PC-3 (cell line): ENCODE measurements at regions of chr1 and their contacts with region 1.

Region 1: DNA sequence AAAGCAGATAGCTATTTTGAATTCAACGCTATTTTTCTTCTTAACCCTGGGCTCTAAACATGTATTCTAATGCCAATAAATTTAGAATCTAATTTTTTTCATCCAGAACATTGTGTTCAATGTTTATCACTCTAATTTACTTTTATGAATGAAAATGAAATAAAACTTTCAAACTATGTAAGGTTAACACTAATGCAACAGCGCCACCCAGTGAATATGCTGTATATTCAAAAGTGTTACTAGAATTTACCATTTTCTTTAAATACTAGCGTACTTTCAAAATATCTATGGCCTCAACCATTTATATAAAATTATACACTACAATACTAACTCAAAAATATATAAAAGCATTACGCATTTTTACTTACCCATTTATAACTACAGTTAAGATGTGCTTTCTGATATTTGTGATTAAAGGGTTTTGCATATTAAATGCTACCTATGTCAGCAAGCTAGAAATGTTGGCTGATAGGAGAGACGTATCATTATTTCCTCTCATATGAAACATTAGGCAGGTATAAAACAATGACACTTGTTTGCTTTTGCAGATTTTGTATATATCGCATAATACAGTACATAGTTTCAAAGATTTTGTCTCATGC is 5.9 kb upstream of the NUF2 start:
- DNase-seq: peak; percentile 68
- ATAC-seq: peak; percentile 37; the same call in 1 of the 2 replicates
- H3K4me3 ChIP-seq: no peak overlapping the region
- H3K27ac ChIP-seq: no peak overlapping the region
- H3K4me1 ChIP-seq: peaks cover 8% of the 10 kb centered on the region; the same call in 1 of the 2 replicates
- H3K27me3 ChIP-seq: no peaks in the 10 kb centered on the region
- CTCF ChIP-seq: peak; percentile 95

Region 2: DNA sequence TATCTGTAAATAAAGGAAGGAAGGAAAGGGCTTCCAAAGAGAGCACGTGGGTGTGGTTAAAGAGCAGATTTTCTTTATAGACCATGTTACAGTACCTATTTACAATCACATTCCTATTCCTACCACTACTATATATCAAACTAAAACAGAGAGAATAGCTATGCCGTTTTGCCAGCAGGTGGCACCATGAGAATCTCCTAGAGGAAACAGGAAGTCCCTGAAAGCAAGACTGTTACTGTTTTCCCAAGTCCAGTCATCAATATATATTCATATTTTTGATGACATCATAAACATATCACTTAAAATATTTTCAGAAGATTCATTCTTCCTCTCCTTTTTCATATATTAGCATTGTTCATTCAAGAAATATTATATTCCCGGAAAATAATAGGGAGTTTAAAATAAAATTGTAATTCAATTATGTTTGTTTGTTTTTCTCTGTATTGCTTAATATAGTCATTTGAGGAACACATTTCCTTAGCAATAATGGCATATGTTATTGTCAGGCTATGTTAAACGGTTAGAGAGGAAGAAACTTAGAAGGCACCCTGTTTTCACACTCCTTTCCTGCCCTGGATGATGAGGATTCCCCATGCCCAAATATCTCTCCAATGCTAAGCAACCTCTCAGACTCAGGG is 461.5 kb before region 1 on chr1:
- CTCF ChIA-PET with region 1: no interaction called
- POLR2A ChIA-PET with region 1: no interaction called
- intact Hi-C with region 1: loop called (anchors 2 kb)
- DNase-seq: peak; percentile 93
- ATAC-seq: peak; percentile 52
- H3K4me3 ChIP-seq: no peak overlapping the region
- H3K27ac ChIP-seq: peak overlapping the region; percentile 81
- H3K4me1 ChIP-seq: peaks cover 49% of the 10 kb centered on the region
- H3K27me3 ChIP-seq: no peaks in the 10 kb centered on the region
- CTCF ChIP-seq: peak; percentile 97